Activated B cell treated with CpG ODN at 0.5 μM for 24 hours (primary cell): ENCODE measurements at regions of chr5 and their contacts with region 1.

Region 1: GRCh38 chr5:87383216-87383615 is 29.5 kb downstream of the CCNH start:
- DNase-seq: no peak
- ATAC-seq: no peak
- H3K4me3 Mint-ChIP-seq: no peak overlapping the region
- H3K27ac Mint-ChIP-seq: no peak overlapping the region
- H3K4me1 Mint-ChIP-seq: no peaks in the 10 kb centered on the region
- H3K27me3 Mint-ChIP-seq: no peaks in the 10 kb centered on the region
- CTCF ChIP-seq: no peak

Region 2: GRCh38 chr5:87347272-87347671 is 35.9 kb before region 1 on chr5:
- CTCF ChIA-PET with region 1: no interaction called
- POLR2A ChIA-PET with region 1: no interaction called
- intact Hi-C with region 1: no loop called
- DNase-seq: no peak
- ATAC-seq: no peak
- H3K4me3 Mint-ChIP-seq: no peak overlapping the region
- H3K27ac Mint-ChIP-seq: no peak overlapping the region
- H3K4me1 Mint-ChIP-seq: peaks cover 11% of the 10 kb centered on the region
- H3K27me3 Mint-ChIP-seq: no peaks in the 10 kb centered on the region
- CTCF ChIP-seq: no peak

Region 3: DNA sequence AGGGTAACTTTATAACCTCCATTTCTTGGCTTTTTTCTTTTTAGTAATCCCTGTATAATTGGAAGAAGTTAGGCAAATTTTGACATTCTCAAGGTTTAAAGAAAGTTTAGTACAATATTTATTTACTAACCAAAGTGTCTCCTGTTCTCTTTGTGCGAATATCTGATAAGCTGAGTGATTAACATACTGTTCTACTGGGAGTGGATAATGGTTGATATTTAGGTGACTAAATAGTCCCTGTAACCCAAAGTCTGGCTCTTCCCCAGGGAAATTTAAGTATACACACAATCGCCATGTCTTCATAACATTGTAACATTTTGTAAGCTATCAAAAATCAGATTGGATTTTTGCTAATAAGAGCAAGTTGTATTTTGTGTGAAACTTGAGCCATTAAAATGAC is 10.5 kb before region 1 on chr5:
- CTCF ChIA-PET with region 1: no interaction called
- POLR2A ChIA-PET with region 1: no interaction called
- intact Hi-C with region 1: loop called (anchors 1 kb)
- DNase-seq: no peak
- ATAC-seq: no peak
- H3K4me3 Mint-ChIP-seq: no peak overlapping the region
- H3K27ac Mint-ChIP-seq: no peak overlapping the region
- H3K4me1 Mint-ChIP-seq: no peaks in the 10 kb centered on the region
- H3K27me3 Mint-ChIP-seq: no peaks in the 10 kb centered on the region
- CTCF ChIP-seq: no peak

Region 4: GRCh38 chr5:87393331-87393730 is 10.1 kb after region 1 on chr5:
- CTCF ChIA-PET with region 1: no interaction called
- POLR2A ChIA-PET with region 1: no interaction called
- intact Hi-C with region 1: loop called (anchors 2 kb)
- DNase-seq: no peak
- ATAC-seq: no peak
- H3K4me3 Mint-ChIP-seq: no peak overlapping the region
- H3K27ac Mint-ChIP-seq: no peak overlapping the region
- H3K4me1 Mint-ChIP-seq: no peaks in the 10 kb centered on the region
- H3K27me3 Mint-ChIP-seq: no peaks in the 10 kb centered on the region
- CTCF ChIP-seq: no peak

Region 5: DNA sequence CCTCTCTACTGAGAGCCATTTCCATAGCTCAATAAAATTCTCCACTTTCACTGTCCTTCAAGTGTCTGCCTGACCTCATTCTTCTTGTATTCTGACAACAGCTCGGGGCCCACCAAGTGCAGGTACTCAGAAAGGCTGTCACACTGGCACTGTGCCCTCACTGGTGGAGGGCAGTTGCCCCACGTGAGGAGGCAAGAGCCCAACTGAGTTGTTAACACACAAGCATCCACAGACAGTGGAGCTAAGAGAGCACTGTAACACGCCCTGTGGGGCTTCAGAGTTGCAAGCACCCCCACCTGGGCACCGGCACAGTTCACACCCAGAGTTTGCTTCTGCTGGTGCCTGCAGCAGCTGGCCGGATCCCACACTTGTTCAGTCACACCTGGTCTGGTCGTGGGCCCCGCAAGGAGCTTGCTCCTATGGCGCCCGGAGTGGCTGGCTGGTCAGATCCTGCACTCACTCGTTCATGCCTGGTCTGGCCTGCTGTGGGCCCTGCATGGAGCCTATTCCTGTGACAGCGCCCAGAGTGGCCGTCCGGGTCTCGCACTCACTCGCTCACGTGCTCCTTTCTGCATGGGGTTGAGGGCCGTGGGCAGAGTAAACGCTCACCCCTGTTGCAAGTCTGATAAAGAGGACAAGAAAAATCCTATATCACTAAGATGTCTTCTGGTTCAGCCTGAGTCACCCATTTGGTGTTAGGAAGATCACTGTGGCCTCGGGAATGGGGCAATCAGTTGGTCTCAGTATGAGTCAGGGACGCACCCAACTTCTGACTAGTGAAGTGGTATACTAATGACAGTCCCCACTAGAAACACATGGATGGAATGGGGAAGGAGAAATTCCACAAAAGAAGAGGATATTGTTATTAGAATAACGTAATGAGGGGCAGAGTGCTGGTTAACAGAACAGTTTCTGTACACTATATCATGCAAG is 116.5 kb after region 1 on chr5:
- CTCF ChIA-PET with region 1: no interaction called
- POLR2A ChIA-PET with region 1: no interaction called
- intact Hi-C with region 1: no loop called
- DNase-seq: no peak
- ATAC-seq: no peak
- H3K4me3 Mint-ChIP-seq: no peak overlapping the region
- H3K27ac Mint-ChIP-seq: no peak overlapping the region
- H3K4me1 Mint-ChIP-seq: no peaks in the 10 kb centered on the region
- H3K27me3 Mint-ChIP-seq: peaks cover 1% of the 10 kb centered on the region
- CTCF ChIP-seq: no peak